B cell (primary cell): ENCODE measurements at regions of chr4 and their contacts with region 1.

Region 1: DNA sequence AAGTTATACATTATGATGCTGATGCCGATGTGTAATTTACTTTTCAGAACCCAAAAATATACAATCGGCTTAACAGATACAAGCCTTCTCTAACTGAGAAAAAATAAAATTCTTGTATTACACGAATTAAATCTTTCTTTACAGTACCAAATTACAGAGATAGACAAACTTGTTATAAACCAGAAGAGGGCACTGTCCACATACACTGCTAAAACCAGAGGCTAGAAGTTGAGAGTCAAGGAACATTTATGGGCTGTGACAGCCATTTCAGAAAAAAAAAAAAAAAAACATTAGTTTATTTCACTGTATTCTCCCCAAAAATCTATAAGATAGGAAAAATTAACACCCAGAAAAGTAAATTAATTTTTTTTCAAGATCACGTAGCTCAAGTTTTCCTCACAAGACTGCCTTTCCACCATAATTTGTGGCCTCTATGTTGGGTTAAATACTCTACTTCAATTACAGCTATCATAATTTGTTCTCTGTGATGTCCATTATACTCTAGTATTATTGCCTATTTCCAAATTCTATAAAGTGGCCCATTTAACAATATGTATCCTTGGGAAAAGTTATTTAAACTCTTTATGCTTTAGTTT is 12.0 kb downstream of the EREG start:
- DNase-seq: peak; percentile 67
- ATAC-seq: peak; percentile 54
- H3K4me3 ChIP-seq: no peak overlapping the region
- H3K4me3 Mint-ChIP-seq: no peak overlapping the region
- H3K27ac ChIP-seq: no peak overlapping the region
- H3K27ac Mint-ChIP-seq: no peak overlapping the region
- H3K4me1 ChIP-seq: no peaks in the 10 kb centered on the region
- H3K4me1 Mint-ChIP-seq: no peaks in the 10 kb centered on the region
- H3K27me3 ChIP-seq: no peaks in the 10 kb centered on the region
- H3K27me3 Mint-ChIP-seq: peaks cover 8% of the 10 kb centered on the region
- CTCF ChIP-seq: peak; percentile 83

Region 2: DNA sequence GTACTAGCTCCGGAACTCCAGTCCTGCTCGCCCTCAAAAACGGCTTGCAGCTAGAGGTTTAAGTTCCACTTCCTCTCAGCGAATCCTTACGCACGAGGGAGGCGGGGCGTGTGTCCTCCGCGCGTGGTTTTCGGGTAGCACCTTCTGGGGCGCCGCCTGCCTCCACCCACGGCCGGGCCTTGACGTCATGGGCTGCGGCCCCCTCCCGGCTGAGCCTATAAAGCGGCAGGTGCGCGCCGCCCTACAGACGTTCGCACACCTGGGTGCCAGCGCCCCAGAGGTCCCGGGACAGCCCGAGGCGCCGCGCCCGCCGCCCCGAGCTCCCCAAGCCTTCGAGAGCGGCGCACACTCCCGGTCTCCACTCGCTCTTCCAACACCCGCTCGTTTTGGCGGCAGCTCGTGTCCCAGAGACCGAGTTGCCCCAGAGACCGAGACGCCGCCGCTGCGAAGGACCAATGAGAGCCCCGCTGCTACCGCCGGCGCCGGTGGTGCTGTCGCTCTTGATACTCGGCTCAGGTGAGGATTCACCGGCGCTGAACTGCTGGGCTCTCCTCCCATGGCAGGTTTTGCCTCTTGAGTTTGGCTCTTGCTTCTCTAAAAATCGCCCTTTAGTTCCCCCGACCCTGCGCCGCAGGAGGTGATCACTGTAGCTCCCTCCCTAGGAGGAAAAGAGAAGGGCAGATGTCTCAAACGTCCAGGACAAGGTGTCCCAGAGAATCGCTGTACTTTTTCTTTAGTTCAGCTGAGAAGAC is 68.1 kb after region 1 on chr4 and contains the start of gene AREG:
- CTCF ChIA-PET with region 1: interaction called, 8 read pairs
- POLR2A ChIA-PET with region 1: interaction called, 5 read pairs
- intact Hi-C with region 1: loop called (anchors 1 kb)
- DNase-seq: peak; percentile 98
- ATAC-seq: peak; percentile 93
- H3K4me3 ChIP-seq: peak within 1 kb of the TSS; percentile 67 to 89 (median 84)
- H3K4me3 Mint-ChIP-seq: peak within 1 kb of the TSS; percentile 89
- H3K27ac ChIP-seq: peak within 1 kb of the TSS; percentile 94 to 97
- H3K27ac Mint-ChIP-seq: peak within 1 kb of the TSS; percentile 95
- H3K4me1 ChIP-seq: peaks cover 8 to 9% of the 10 kb centered on the region in 2 donors
- H3K4me1 Mint-ChIP-seq: peaks cover 12% of the 10 kb centered on the region
- H3K27me3 ChIP-seq: no peaks in the 10 kb centered on the region
- H3K27me3 Mint-ChIP-seq: peaks cover 4% of the 10 kb centered on the region
- CTCF ChIP-seq: peak; percentile 71
- total RNA-seq, gene AREG: 4.6 and 4.9 TPM in 2 replicates

Region 3: DNA sequence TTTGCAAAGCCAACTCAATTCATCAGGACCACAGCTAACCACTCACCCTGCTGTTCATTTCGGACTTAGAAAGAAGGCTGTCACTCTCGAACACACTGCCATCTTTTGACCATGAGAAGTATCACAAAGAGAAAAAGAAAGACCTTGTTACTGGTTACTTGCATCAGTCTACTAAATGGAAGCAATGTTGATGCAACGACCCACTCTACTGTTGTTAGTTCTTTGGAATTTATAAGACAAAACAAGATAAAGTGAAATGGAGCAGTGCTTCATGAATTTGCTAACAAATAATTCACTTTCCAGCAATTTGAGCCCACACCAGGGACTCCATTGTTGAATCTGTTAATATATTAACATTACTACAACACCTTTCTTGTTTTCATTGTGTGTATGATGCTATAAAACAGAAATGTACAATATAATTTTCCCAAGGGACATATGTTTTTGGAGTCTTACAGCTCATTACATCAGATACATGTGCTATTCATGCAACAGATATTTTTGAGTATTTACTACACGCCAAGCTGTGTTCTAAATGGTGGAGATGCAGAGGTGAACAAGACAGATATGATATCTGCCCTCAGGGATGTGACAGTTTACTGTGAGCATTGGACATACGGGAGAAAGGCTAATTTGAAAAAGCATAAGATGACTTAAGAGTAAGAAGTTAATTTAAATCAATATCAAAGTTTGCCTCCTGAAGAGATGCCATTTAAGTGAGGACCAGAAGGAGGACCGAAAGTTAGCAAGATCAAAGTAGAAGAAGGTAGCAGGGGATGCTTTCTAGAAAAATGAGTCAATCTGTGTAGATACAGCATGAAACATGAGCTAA is 155.2 kb after region 1 on chr4:
- CTCF ChIA-PET with region 1: interaction called, 152 read pairs
- POLR2A ChIA-PET with region 1: no interaction called
- intact Hi-C with region 1: loop called (anchors 1 kb)
- DNase-seq: peak; percentile 66
- ATAC-seq: peak; percentile 53
- H3K4me3 ChIP-seq: no peak overlapping the region
- H3K4me3 Mint-ChIP-seq: no peak overlapping the region
- H3K27ac ChIP-seq: no peak overlapping the region
- H3K27ac Mint-ChIP-seq: no peak overlapping the region
- H3K4me1 ChIP-seq: no peaks in the 10 kb centered on the region
- H3K4me1 Mint-ChIP-seq: no peaks in the 10 kb centered on the region
- H3K27me3 ChIP-seq: peaks cover 0 to 4% (median 0%) of the 10 kb centered on the region in 4 experiments
- H3K27me3 Mint-ChIP-seq: peaks cover 13% of the 10 kb centered on the region
- CTCF ChIP-seq: peak; percentile 62

Region 4: GRCh38 chr4:74623041-74623440 is 246.1 kb after region 1 on chr4:
- CTCF ChIA-PET with region 1: interaction called, 48 read pairs
- POLR2A ChIA-PET with region 1: no interaction called
- intact Hi-C with region 1: loop called (anchors 1 kb)
- DNase-seq: peak; percentile 39
- ATAC-seq: no peak
- H3K4me3 ChIP-seq: no peak overlapping the region
- H3K4me3 Mint-ChIP-seq: no peak overlapping the region
- H3K27ac ChIP-seq: no peak overlapping the region
- H3K27ac Mint-ChIP-seq: no peak overlapping the region
- H3K4me1 ChIP-seq: no peaks in the 10 kb centered on the region
- H3K4me1 Mint-ChIP-seq: no peaks in the 10 kb centered on the region
- H3K27me3 ChIP-seq: no peaks in the 10 kb centered on the region
- H3K27me3 Mint-ChIP-seq: peaks cover 10% of the 10 kb centered on the region
- CTCF ChIP-seq: peak; percentile 59

Region 5: DNA sequence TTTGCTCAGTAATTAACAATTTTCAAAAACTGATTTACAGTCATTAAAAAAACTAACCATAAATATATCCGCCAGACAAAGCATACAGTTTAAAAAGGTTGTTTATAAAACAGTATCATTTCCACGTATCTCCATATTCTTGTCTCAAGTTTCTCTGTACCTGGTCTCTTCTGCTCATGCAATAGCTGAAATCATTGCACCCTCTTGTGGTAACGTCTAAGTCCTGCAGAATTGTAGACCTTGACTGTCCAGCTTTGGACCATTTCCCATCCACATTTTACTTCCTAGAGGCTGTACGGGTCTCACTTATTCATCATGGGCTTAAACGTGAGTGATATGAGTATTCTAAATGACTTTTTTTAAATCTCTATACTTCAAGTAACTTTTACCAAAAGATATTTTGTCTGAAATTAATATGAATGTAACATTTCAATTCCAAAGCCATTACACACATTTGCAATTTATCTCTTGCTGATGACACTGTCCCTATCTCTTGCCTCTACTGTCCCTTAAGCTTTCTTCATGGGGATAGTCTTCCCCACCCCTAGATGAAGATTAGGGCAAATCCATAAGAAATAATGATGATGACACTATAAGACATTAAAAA is 298.8 kb after region 1 on chr4:
- CTCF ChIA-PET with region 1: interaction called, 67 read pairs
- POLR2A ChIA-PET with region 1: no interaction called
- intact Hi-C with region 1: loop called (anchors 1 kb)
- DNase-seq: peak; percentile 44
- ATAC-seq: peak; percentile 56
- H3K4me3 ChIP-seq: no peak overlapping the region
- H3K4me3 Mint-ChIP-seq: no peak overlapping the region
- H3K27ac ChIP-seq: no peak overlapping the region
- H3K27ac Mint-ChIP-seq: no peak overlapping the region
- H3K4me1 ChIP-seq: no peaks in the 10 kb centered on the region
- H3K4me1 Mint-ChIP-seq: peaks cover 3% of the 10 kb centered on the region
- H3K27me3 ChIP-seq: no peaks in the 10 kb centered on the region
- H3K27me3 Mint-ChIP-seq: peaks cover 31% of the 10 kb centered on the region
- CTCF ChIP-seq: peak; percentile 79